H1 (cell line): ENCODE measurements at regions of chr19 and their contacts with region 1.

Region 1: GRCh38 chr19:35869327-35870123 is 1.2 kb downstream of the APLP1 start:
- DNase-seq: peak; percentile 82 to 94
- H3K4me3 ChIP-seq: peak overlapping the region; percentile 38 to 64 (median 52); a peak in 7 of 8 replicates
- H3K27ac ChIP-seq: no peak overlapping the region
- H3K4me1 ChIP-seq: peaks cover 0 to 12% (median 8%) of the 10 kb centered on the region in 4 experiments; a peak in 5 of 7 replicates
- H3K27me3 ChIP-seq: peaks cover 3 to 12% (median 9%) of the 10 kb centered on the region in 4 experiments
- CTCF ChIP-seq: 0 out of 4 replicates have a peak, but pooled peaks of 1 of the 3 experiments have one; percentile 4
- EP300 ChIP-seq: no peak
- POLR2A ChIP-seq: no peak
- RAD21 ChIP-seq: no peak

Region 2: DNA sequence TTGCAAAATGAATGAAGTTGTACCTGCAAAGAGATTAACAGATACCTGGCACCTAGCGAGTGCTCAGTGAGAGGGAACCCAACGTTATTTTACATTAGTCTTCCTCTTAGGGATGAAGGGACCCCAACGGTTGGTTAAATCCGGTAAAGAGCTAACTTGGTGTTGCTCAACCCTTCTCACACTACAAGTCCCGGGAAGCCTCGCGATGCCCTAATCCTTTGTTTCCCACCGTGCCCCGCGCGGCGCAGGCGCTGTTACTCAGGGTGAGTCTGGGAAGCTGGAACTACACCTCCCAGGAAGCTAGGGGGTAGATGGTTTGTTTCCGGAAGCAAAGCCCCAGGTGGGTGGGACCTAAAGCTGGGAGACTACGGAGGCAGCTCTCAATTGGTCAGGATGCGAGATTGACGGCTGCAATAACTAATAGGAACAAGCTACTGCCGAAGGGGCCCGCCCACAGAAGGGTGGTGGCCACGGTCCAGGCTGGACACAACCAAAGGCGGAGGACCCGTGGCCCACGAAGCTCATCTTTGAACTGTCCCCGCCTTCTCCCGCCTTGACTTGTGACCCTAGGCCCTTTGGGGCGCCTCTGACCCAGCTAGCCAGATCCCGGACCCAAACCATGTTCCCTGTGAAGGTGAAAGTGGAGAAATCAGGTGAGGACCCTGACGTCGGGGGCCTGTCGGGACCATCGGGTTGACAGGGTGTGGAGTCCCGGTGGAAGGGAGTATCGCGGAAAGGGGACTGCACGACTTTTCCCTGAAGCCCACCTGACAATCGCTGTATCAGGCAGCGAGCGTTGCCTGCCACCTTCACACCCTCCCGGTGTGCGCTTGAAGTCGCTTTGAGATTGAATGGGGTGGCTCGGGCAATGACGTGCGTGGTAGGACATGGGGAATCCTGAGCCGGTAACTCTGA is 121.2 kb before region 1 on chr19 and contains the start of gene LIN37:
- CTCF ChIA-PET with region 1: no interaction called
- POLR2A ChIA-PET with region 1: interaction called, 10 read pairs
- DNase-seq: peak; percentile 97 to 99
- H3K4me3 ChIP-seq: peak within 1 kb of the TSS; percentile 58 to 93 (median 90)
- H3K27ac ChIP-seq: no peak within 1 kb of the TSS
- H3K4me1 ChIP-seq: peaks cover 0 to 4% (median 2%) of the 10 kb centered on the region in 4 experiments; a peak in 3 of 7 replicates
- H3K27me3 ChIP-seq: no peaks in the 10 kb centered on the region
- CTCF ChIP-seq: no peak
- EP300 ChIP-seq: no peak
- POLR2A ChIP-seq: no peak
- RAD21 ChIP-seq: no peak
- total RNA-seq, gene LIN37: 2.9 and 3.8 TPM in 2 replicates

Region 3: DNA sequence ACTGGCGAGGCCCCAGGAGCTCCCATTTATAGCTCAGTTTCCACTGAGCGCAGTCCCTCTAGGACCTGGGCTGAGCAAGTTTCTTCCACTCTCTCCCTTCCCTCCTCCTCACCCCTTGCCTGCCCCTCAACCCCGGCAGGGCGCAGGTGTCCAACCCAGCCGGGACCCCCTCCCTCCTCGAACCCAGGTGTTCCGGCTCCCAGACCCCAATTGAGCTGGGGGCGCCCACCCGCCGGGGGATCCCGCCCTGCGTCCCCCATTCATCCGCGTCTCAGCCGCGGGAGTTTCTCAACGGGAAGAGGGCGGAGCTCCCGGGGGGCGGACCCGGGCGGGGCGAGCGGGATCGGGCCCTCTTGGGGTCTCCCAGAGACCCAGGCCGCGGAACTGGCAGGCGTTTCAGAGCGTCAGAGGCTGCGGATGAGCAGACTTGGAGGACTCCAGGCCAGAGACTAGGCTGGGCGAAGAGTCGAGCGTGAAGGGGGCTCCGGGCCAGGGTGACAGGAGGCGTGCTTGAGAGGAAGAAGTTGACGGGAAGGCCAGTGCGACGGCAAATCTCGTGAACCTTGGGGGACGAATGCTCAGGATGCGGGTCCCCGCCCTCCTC is 12.9 kb before region 1 on chr19 and contains the start of gene KIRREL2:
- CTCF ChIA-PET with region 1: interaction called, 6 read pairs
- POLR2A ChIA-PET with region 1: interaction called, 20 read pairs
- DNase-seq: peak in 1 of 2 experiments; percentile 90
- H3K4me3 ChIP-seq: peak within 1 kb of the TSS; percentile 53 to 78 (median 70)
- H3K27ac ChIP-seq: no peak within 1 kb of the TSS
- H3K4me1 ChIP-seq: peaks cover 0 to 21% (median 12%) of the 10 kb centered on the region in 4 experiments; a peak in 6 of 7 replicates
- H3K27me3 ChIP-seq: peaks cover 7 to 59% (median 52%) of the 10 kb centered on the region in 4 experiments
- CTCF ChIP-seq: no peak
- EP300 ChIP-seq: no peak
- POLR2A ChIP-seq: no peak
- RAD21 ChIP-seq: no peak
- total RNA-seq, gene KIRREL2: 4.6 TPM in 2 replicates